Mammary epithelial cell (primary cell): ENCODE measurements at regions of chr9 and their contacts with region 1.

Region 1: DNA sequence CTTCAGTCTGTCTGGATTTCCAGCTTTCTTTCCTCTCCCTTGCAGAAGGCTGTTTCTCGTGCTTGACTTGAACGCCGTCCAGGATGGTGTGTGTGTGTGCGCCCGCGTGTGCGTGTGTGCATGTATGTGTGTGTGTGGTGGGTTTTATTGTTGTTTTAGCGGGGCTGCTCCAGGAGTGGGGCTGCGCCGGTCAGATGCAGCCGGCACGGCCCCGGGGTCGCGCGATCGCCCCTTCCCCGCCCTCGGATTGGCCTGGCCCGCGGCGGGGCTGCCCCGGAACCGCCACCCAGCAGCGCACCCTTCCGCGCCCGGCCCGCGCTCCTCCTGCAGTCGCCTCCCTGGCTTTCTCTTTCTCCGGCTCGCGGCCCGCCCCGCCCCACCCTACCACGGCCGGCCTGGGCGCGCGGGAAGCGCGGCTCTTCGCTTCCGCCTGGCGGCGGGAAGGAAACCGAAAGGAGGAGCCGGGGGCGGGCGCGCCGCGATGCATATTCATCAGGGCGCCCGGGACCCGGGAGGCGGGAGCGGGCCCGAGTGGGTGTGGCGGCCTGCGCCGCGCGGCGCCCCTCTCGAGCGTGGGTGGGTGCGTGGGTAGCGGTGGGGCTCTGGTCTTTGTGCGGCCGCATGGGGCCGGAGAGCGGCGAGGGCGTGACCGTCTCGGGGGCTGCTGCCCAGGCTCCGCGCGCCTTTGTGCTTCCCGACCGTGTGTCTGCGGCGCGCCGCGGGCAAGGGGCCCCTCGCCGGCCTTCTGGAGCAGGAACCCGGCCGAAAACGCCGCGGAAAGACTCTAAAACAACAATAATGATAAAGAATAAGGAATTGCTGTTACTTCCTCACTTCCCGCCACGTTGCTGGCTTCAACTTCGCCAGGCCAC is 8.5 kb upstream of the NFIB start:
- DNase-seq: peak; percentile 92
- H3K4me3 ChIP-seq: peak overlapping the region; percentile 63 to 77 (median 65)
- H3K27ac ChIP-seq: peak overlapping the region; percentile 83
- H3K4me1 ChIP-seq: peaks cover 53% of the 10 kb centered on the region
- H3K27me3 ChIP-seq: no peaks in the 10 kb centered on the region
- CTCF ChIP-seq: peak in 1 of 2 donors; percentile 57

Region 2: GRCh38 chr9:14080959-14081542 is 241.4 kb before region 1 on chr9:
- CTCF ChIA-PET with region 1: no interaction called
- dilution Hi-C with region 1: no loop called
- in situ Hi-C with region 1: no loop called
- intact Hi-C with region 1: loop called (anchors 2 kb)
- DNase-seq: peak; percentile 95
- H3K4me3 ChIP-seq: no peak overlapping the region
- H3K27ac ChIP-seq: peak overlapping the region; percentile 33
- H3K4me1 ChIP-seq: peaks cover 25% of the 10 kb centered on the region
- H3K27me3 ChIP-seq: no peaks in the 10 kb centered on the region
- CTCF ChIP-seq: peak in 1 of 2 donors; percentile 16

Region 3: DNA sequence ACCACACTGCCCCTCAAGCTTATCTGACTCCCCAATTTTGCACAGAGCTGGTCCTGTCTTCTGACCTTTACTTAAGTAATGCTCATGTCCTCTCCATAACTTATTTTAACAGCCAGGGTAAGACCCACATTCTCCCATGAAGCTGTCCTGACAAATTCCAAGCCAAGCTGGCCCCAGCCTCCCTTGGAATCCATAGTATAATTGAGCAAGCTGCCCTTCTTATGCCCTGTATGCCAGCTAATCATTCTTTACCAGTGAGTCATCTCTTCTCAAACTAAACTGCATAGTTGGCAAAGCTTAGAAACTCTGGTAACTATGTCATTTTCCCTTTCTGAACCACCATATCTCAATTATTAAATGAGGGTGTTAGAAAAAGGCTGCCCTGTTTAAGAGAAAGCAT is 100.9 kb before region 1 on chr9:
- CTCF ChIA-PET with region 1: no interaction called
- dilution Hi-C with region 1: loop called (anchors 25 kb)
- in situ Hi-C with region 1: no loop called
- intact Hi-C with region 1: no loop called
- DNase-seq: peak; percentile 70
- H3K4me3 ChIP-seq: no peak overlapping the region
- H3K27ac ChIP-seq: peak overlapping the region; percentile 42
- H3K4me1 ChIP-seq: peaks cover 38% of the 10 kb centered on the region
- H3K27me3 ChIP-seq: no peaks in the 10 kb centered on the region
- CTCF ChIP-seq: no peak

Region 4: GRCh38 chr9:14400658-14400995 is 78.2 kb after region 1 on chr9:
- CTCF ChIA-PET with region 1: no interaction called
- dilution Hi-C with region 1: no loop called
- in situ Hi-C with region 1: no loop called
- intact Hi-C with region 1: loop called (anchors 2 kb)
- DNase-seq: peak; percentile 77
- H3K4me3 ChIP-seq: peak overlapping the region in 1 of 3 experiments; percentile 31
- H3K27ac ChIP-seq: no peak overlapping the region
- H3K4me1 ChIP-seq: peaks cover 6% of the 10 kb centered on the region
- H3K27me3 ChIP-seq: peaks cover 5% of the 10 kb centered on the region
- CTCF ChIP-seq: peak; percentile 60 to 66